ENCODE measurements at regions of chr7 and their contacts with region 1.

Region 1: DNA sequence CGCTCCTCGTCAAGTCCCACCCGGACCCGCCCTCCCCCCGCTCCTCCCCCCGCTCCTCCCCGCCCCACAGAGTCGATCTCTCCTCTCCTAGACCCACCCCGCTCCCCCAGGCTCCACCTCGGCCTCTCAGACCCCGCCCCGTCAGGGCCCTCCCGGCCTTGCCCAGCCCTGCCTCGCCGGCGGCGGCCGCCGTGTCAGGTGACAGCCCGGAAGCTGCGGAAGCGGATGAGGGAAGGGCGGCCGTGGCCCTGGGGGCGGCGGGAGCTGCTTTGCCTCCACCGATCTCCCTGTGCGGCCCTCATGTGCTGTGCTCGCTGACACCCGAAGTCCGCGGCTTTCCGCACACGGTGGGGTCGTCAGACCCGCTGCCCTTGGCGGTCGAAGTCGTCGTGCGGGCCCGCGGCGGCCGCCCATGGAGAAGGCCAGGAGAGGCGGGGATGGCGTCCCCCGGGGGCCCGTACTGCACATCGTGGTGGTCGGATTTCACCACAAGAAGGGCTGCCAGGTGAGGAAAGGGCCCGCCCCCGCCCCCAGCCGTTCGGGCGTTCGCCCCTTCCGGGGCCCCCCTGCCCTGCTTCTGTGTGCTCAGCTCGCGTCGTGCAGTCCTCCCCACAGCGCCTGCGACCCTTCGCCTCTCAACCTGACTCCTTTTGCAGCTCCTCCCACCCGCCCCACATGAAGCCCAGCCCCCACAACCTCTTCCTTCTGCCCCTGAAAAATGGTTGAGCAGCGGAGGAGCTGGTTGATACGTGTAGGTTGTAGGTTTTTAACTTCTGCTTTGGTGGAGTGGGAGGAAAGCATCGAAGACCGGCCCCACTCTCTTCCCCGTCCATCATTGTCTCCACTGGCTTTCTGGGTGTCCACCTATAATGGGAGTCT is at the start of gene AVL9:
- DNase-seq: peak; percentile 89 to 100
- H3K4me3 ChIP-seq: peak within 1 kb of the TSS; percentile 92
- H3K27ac ChIP-seq: peak within 1 kb of the TSS; percentile 80
- H3K4me1 ChIP-seq: peaks cover 38% of the 10 kb centered on the region
- H3K27me3 ChIP-seq: no peaks in the 10 kb centered on the region
- CTCF ChIP-seq: no peak
- total RNA-seq, gene AVL9: 57.1 and 68.8 TPM in 2 replicates

Region 2: DNA sequence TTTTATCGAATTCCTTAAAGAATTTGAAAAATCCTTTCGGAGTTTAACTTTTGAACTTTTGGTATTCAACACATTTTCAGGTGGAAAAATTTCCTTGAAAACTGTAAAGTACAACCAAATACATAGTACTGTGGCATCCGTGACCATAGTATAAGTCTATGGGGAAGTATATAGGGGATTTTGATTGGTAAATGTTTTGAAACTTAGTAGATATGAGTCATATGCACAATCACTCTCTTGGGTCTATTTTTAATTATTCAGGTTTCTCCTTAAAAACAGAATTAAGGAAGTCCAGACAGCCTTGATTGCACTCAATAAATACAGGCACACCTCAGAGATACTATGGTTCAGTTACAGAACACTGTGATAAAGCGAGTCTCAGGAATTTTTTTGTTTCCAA is 63.9 kb after region 1 on chr7:
- CTCF ChIA-PET with region 1: no interaction called
- POLR2A ChIA-PET with region 1: interaction called, 7 read pairs
- intact Hi-C with region 1: loop called (anchors 5 kb)
- DNase-seq: no peak
- H3K4me3 ChIP-seq: no peak overlapping the region
- H3K27ac ChIP-seq: no peak overlapping the region
- H3K4me1 ChIP-seq: no peaks in the 10 kb centered on the region
- H3K27me3 ChIP-seq: no peaks in the 10 kb centered on the region
- CTCF ChIP-seq: no peak

Region 3: DNA sequence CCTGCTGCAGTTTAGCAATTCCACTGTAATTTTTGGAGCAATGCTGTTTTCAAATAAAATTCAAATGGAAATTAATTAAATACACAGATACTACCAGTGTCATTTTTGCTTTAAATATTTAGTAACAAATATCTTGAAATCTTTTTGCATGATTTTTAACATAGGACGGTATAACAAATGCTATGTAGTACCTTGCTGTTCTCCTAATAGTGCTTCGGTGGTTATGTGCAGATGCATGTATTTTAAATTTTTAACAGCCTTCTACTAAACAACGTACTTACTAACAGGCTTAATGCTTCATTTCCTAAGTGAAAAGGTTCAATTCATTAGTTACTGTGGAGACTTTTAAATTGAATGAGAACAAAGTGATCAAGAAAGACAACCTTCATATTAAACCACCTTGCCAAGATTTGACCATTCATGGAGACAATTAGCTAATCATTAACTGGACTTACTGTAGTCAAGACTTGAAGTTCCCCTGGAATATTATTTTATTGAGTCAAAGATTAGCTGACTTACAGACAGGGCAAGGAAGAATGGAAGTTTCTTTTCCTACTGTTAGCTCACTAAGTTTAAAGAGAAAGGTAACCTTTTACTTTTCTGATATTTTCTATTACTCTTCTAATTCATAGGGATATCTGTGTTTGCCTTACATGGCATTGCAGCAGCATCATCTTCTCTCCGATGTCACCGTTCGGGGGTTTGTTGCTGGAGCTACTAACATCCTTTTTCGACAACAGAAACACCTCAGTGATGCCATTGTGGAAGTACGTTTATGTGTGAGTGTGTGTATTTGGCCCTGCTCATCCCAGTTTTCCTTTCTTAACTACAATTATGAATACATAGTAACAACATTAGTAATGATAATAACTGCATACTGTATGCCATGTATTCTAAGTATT is 74.1 kb after region 1 on chr7:
- CTCF ChIA-PET with region 1: no interaction called
- POLR2A ChIA-PET with region 1: no interaction called
- intact Hi-C with region 1: loop called (anchors 5 kb)
- DNase-seq: no peak
- H3K4me3 ChIP-seq: no peak overlapping the region
- H3K27ac ChIP-seq: no peak overlapping the region
- H3K4me1 ChIP-seq: no peaks in the 10 kb centered on the region
- H3K27me3 ChIP-seq: no peaks in the 10 kb centered on the region
- CTCF ChIP-seq: no peak

Region 4: DNA sequence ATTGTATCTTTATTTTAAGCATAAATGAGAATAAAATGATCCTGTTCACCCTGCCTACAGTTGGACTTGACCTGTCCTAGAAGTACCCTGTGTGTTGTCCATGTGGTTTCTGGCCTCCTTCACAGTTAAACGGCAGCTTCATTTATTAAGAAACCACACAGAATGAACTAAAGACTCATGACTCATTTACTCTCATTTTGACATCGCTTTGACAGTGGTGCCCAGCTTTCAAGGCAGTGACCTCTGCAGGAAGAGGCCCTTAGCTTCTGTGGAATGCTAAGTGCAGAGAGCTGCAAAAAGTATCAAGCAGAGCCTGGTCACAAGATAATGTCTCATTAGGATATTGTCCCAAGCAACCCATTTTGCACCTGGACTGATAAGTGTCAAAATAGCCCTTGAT is 93.1 kb after region 1 on chr7:
- CTCF ChIA-PET with region 1: no interaction called
- POLR2A ChIA-PET with region 1: interaction called, 25 read pairs
- intact Hi-C with region 1: no loop called
- DNase-seq: peak in 1 of 2 experiments; percentile 22
- H3K4me3 ChIP-seq: no peak overlapping the region
- H3K27ac ChIP-seq: peak overlapping the region; percentile 3; the same call in 1 of the 2 replicates
- H3K4me1 ChIP-seq: no peaks in the 10 kb centered on the region; the same call in 1 of the 2 replicates
- H3K27me3 ChIP-seq: no peaks in the 10 kb centered on the region
- CTCF ChIP-seq: no peak

Region 5: DNA sequence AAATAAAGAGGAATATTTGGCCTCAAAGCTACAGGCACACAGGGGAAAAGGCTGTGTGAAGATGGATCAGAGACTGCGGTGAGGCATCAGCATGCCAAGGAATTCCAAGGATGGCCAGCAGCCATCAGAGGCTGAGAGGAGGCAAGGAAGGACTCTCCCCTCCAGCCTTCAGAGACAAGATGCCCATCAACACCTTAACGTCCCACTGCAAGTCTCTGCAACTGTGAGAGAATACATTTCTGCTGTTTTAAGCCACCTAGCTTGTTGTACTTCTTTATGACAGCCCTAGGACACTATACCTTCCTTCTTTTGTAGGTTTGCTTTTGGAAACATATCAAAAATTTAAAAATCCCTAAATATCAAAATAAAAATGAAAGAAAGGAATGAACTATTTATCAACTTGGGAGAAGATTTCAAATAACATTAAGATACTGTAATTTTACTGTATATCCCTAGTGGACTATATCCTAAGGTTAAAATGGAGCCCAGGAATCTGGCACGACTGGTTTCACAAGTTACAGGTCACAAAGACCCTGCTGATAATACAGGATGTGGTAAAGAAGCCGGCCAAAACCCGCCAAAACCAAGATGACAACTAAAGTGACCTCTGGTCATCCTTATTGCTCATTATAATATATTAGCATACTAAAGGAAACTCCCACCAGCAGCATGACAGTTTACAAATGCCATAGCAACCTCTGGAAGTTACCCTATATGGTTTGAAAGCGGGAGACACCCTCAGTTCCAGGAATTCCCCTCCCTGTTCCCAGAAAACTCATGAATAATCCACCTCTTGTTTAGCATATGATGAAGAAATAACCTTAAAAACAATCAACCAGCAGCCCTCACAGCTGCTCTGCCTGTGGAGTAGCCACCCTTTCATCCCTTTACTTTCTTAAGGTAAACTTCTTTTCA is 185.0 kb after region 1 on chr7:
- CTCF ChIA-PET with region 1: no interaction called
- POLR2A ChIA-PET with region 1: no interaction called
- intact Hi-C with region 1: loop called (anchors 2 kb)
- DNase-seq: peak; percentile 89 to 99
- H3K4me3 ChIP-seq: peak overlapping the region; percentile 27
- H3K27ac ChIP-seq: peak overlapping the region; percentile 86
- H3K4me1 ChIP-seq: peaks cover 44% of the 10 kb centered on the region
- H3K27me3 ChIP-seq: no peaks in the 10 kb centered on the region
- CTCF ChIP-seq: no peak

Region 6: DNA sequence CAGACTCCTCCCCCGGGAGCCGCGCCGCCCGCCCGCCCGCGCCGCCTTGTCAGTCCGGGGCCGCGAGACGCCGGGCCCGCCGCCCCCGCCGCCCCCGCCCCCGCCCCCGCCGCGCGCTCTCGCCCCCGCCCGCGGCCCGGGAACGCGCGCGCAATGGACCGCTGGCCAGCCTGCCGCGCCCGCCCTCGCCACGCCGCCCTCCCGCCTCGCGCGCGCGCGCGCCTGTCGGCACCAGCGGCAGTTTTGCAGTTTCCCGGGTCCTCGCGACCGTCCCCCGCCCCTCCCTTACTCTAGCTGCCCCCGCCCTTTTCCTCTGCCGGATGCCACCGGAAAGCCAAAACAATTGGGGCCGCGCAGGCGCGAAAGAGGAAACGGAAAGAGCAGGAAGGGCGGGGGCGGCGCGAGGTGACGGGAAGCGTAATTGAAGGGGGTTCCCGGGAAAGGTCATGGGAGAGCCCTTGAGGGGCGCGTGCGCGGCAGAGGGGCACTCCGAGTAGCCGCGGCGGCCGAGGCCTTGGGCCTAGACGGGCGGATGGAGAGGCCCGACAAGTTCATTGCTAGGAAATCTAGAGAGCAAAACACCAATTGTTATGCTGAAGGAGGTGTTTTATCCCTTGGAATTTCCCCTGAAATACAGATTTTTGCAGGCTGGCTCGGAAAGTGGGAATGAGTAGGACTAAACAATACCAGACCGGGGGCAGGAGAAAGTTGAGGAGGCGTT is 396.4 kb after region 1 on chr7:
- CTCF ChIA-PET with region 1: no interaction called
- POLR2A ChIA-PET with region 1: no interaction called
- intact Hi-C with region 1: loop called (anchors 5 kb)
- DNase-seq: peak; percentile 91 to 98
- H3K4me3 ChIP-seq: peak overlapping the region; percentile 86
- H3K27ac ChIP-seq: peak overlapping the region; percentile 87
- H3K4me1 ChIP-seq: peaks cover 35% of the 10 kb centered on the region
- H3K27me3 ChIP-seq: no peaks in the 10 kb centered on the region
- CTCF ChIP-seq: no peak

Region 7: GRCh38 chr7:33040803-33041516 is 545.4 kb after region 1 on chr7:
- CTCF ChIA-PET with region 1: no interaction called
- POLR2A ChIA-PET with region 1: no interaction called
- intact Hi-C with region 1: loop called (anchors 10 kb)
- DNase-seq: peak; percentile 61 to 71
- H3K4me3 ChIP-seq: no peak overlapping the region
- H3K27ac ChIP-seq: peak overlapping the region; percentile 6; the same call in 1 of the 2 replicates
- H3K4me1 ChIP-seq: peaks cover 27% of the 10 kb centered on the region
- H3K27me3 ChIP-seq: no peaks in the 10 kb centered on the region
- CTCF ChIP-seq: no peak

Region 8: DNA sequence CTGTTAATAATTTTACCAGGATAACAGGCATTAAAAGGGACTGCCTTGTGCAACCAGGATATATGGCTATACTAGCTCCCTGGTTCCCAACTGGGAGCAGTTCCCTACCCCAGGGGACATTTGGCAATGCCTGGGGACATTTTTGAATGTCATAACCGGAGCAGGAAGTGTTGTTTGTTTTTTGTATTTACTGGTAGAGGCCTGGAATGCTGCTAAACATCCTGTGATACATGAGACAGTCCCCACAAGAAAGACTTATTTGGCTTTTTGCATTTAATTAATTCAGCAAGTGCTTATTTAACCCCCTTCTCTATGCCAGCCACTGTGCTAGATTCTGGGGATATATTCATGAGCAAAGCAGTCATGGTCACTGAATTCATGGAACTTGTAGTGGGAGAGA is 815.0 kb after region 1 on chr7:
- CTCF ChIA-PET with region 1: no interaction called
- POLR2A ChIA-PET with region 1: no interaction called
- intact Hi-C with region 1: no loop called
- DNase-seq: peak in 1 of 2 experiments; percentile 44
- H3K4me3 ChIP-seq: no peak overlapping the region
- H3K27ac ChIP-seq: no peak overlapping the region
- H3K4me1 ChIP-seq: 0 out of 2 replicates have a peak, but pooled peaks cover 5% of the 10 kb centered on the region
- H3K27me3 ChIP-seq: no peaks in the 10 kb centered on the region
- CTCF ChIP-seq: no peak